HepG2 (cell line): ENCODE measurements at regions of chr6 and their contacts with region 1.

Region 1: GRCh38 chr6:31729515-31729978 is 448 bp upstream of the DDAH2 start:
- DNase-seq: peak; percentile 86
- ATAC-seq: peak; percentile 77
- H3K4me3 ChIP-seq: peak overlapping the region; percentile 60 to 79 (median 72)
- H3K27ac ChIP-seq: peak overlapping the region; percentile 72
- H3K4me1 ChIP-seq: peaks cover 56% of the 10 kb centered on the region
- H3K27me3 ChIP-seq: no peaks in the 10 kb centered on the region
- CTCF ChIP-seq: peak; percentile 96
- EP300 ChIP-seq: 0 out of 4 replicates have a peak, but pooled peaks of 1 of the 2 experiments have one; percentile 4
- POLR2A ChIP-seq: peak in 1 of 2 experiments; percentile 74; a peak in 2 of 4 replicates
- RAD21 ChIP-seq: peak; percentile 99

Region 2: GRCh38 chr6:31702819-31703522 is 26.6 kb before region 1 on chr6 and contains the start of gene ABHD16A:
- CTCF ChIA-PET with region 1: no interaction called
- POLR2A ChIA-PET with region 1: interaction called, 12 read pairs
- in situ Hi-C with region 1: no loop called
- intact Hi-C with region 1: no loop called
- DNase-seq: peak; percentile 98
- ATAC-seq: peak; percentile 93
- H3K4me3 ChIP-seq: peak within 1 kb of the TSS; percentile 71 to 84 (median 81)
- H3K27ac ChIP-seq: peak within 1 kb of the TSS; percentile 85
- H3K4me1 ChIP-seq: peaks cover 39% of the 10 kb centered on the region
- H3K27me3 ChIP-seq: peaks cover 0 to 3% of the 10 kb centered on the region in 2 experiments; a peak in 2 of 5 replicates
- CTCF ChIP-seq: peak; percentile 33
- EP300 ChIP-seq: peak; percentile 56 to 79; a peak in 3 of 4 replicates
- POLR2A ChIP-seq: peak; percentile 93 to 96
- RAD21 ChIP-seq: no peak
- total RNA-seq, gene ABHD16A: 16.2 and 43.5 TPM in 2 replicates

Region 3: GRCh38 chr6:31712296-31712695 is 17.3 kb before region 1 on chr6:
- CTCF ChIA-PET with region 1: no interaction called
- POLR2A ChIA-PET with region 1: interaction called, 11 read pairs
- in situ Hi-C with region 1: no loop called
- intact Hi-C with region 1: no loop called
- DNase-seq: no peak
- ATAC-seq: no peak; the same call in 2 of the 3 replicates
- H3K4me3 ChIP-seq: no peak overlapping the region
- H3K27ac ChIP-seq: no peak overlapping the region
- H3K4me1 ChIP-seq: peaks cover 27% of the 10 kb centered on the region
- H3K27me3 ChIP-seq: peaks cover 11 to 47% of the 10 kb centered on the region in 2 experiments; a peak in 4 of 5 replicates
- CTCF ChIP-seq: no peak
- EP300 ChIP-seq: no peak
- POLR2A ChIP-seq: no peak
- RAD21 ChIP-seq: no peak

Region 4: GRCh38 chr6:31763619-31763940 is 34.0 kb after region 1 on chr6:
- CTCF ChIA-PET with region 1: interaction called, 74 read pairs
- POLR2A ChIA-PET with region 1: interaction called, 279 read pairs
- in situ Hi-C with region 1: loop called (anchors 5 kb)
- intact Hi-C with region 1: no loop called
- DNase-seq: peak; percentile 68
- ATAC-seq: peak; percentile 10
- H3K4me3 ChIP-seq: no peak overlapping the region
- H3K27ac ChIP-seq: no peak overlapping the region
- H3K4me1 ChIP-seq: peaks cover 47% of the 10 kb centered on the region
- H3K27me3 ChIP-seq: no peaks in the 10 kb centered on the region
- CTCF ChIP-seq: peak; percentile 77
- EP300 ChIP-seq: no peak
- POLR2A ChIP-seq: no peak
- RAD21 ChIP-seq: no peak

Region 5: GRCh38 chr6:31769684-31770371 is 40.3 kb after region 1 on chr6:
- CTCF ChIA-PET with region 1: interaction called, 74 read pairs
- POLR2A ChIA-PET with region 1: interaction called, 279 read pairs
- in situ Hi-C with region 1: loop called (anchors 5 kb)
- intact Hi-C with region 1: loop called (anchors 1 kb)
- DNase-seq: peak; percentile 71
- ATAC-seq: peak; percentile 61
- H3K4me3 ChIP-seq: no peak overlapping the region
- H3K27ac ChIP-seq: no peak overlapping the region
- H3K4me1 ChIP-seq: peaks cover 44% of the 10 kb centered on the region
- H3K27me3 ChIP-seq: no peaks in the 10 kb centered on the region
- CTCF ChIP-seq: peak; percentile 98
- EP300 ChIP-seq: no peak
- POLR2A ChIP-seq: no peak
- RAD21 ChIP-seq: peak; percentile 96

Region 6: GRCh38 chr6:31795616-31796298 is 66.2 kb after region 1 on chr6 and contains the start of gene VARS1:
- CTCF ChIA-PET with region 1: interaction called, 3 read pairs
- POLR2A ChIA-PET with region 1: interaction called, 10 read pairs
- in situ Hi-C with region 1: no loop called
- intact Hi-C with region 1: no loop called
- DNase-seq: peak; percentile 90
- ATAC-seq: peak; percentile 89
- H3K4me3 ChIP-seq: peak within 1 kb of the TSS; percentile 89 to 98 (median 98)
- H3K27ac ChIP-seq: peak within 1 kb of the TSS; percentile 76
- H3K4me1 ChIP-seq: peaks cover 25% of the 10 kb centered on the region
- H3K27me3 ChIP-seq: no peaks in the 10 kb centered on the region; a peak in 1 of 5 replicates
- CTCF ChIP-seq: peak; percentile 98
- EP300 ChIP-seq: no peak
- POLR2A ChIP-seq: peak in 1 of 2 experiments; percentile 46; a peak in 1 of 4 replicates
- RAD21 ChIP-seq: peak; percentile 97
- total RNA-seq, gene VARS1: 56.1 and 59.2 TPM in 2 replicates

Region 7: GRCh38 chr6:31897612-31898382 is 168.2 kb after region 1 on chr6 and contains the start of gene EHMT2:
- CTCF ChIA-PET with region 1: no interaction called
- POLR2A ChIA-PET with region 1: no interaction called
- in situ Hi-C with region 1: no loop called
- intact Hi-C with region 1: no loop called
- DNase-seq: peak; percentile 76
- ATAC-seq: peak; percentile 70
- H3K4me3 ChIP-seq: peak within 1 kb of the TSS; percentile 89 to 100 (median 96)
- H3K27ac ChIP-seq: peak within 1 kb of the TSS; percentile 73
- H3K4me1 ChIP-seq: peaks cover 39% of the 10 kb centered on the region
- H3K27me3 ChIP-seq: peaks cover 0 to 7% of the 10 kb centered on the region in 2 experiments; a peak in 1 of 5 replicates
- CTCF ChIP-seq: no peak
- EP300 ChIP-seq: 0 out of 4 replicates have a peak, but pooled peaks of 1 of the 2 experiments have one; percentile 11
- POLR2A ChIP-seq: peak; percentile 62 to 90; a peak in 3 of 4 replicates
- RAD21 ChIP-seq: 0 out of 2 replicates have a peak, but pooled peaks have one; percentile 11
- total RNA-seq, gene EHMT2: 43.5 and 69.2 TPM in 2 replicates

Region 8: DNA sequence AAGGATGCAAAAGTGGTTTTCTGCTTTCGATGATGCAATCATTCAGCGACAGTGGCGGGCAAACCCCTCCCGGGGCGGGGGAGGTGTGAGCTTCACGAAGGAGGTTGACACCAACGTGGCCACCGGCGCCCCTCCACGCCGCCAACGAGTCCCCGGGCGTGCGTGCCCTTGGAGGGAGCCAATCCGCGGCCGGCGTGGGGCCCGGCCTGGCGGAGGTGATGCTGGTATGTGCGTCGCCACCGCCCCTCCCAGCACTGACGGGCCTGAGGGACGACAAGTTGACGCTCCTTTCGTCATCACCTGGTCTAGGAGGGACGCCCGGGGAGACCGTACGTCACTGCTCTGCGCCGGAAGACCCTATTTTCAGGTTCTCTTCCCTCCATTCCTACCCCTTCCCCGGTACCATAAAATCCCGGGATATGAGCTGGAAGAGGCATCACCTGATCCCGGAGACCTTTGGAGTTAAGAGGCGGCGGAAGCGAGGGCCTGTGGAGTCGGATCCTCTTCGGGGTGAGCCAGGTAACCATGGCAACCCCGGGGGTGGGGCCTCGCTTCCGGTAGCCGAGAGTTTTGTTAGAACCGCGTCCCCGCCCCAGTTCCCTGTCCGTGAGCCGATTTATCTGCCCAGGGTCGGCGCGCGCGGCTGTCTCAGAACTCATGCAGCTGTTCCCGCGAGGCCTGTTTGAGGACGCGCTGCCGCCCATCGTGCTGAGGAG is 242.6 kb after region 1 on chr6 and contains the start of gene DXO:
- CTCF ChIA-PET with region 1: no interaction called
- POLR2A ChIA-PET with region 1: no interaction called
- in situ Hi-C with region 1: no loop called
- intact Hi-C with region 1: no loop called
- DNase-seq: peak; percentile 98
- ATAC-seq: peak; percentile 86
- H3K4me3 ChIP-seq: peak within 1 kb of the TSS; percentile 73 to 94 (median 90)
- H3K27ac ChIP-seq: peak within 1 kb of the TSS; percentile 86
- H3K4me1 ChIP-seq: peaks cover 32% of the 10 kb centered on the region
- H3K27me3 ChIP-seq: no peaks in the 10 kb centered on the region; a peak in 1 of 5 replicates
- CTCF ChIP-seq: peak; percentile 17; the same call in 1 of the 2 replicates
- EP300 ChIP-seq: peak in 1 of 2 experiments; percentile 58; a peak in 1 of 4 replicates
- POLR2A ChIP-seq: peak; percentile 52 to 60; a peak in 3 of 4 replicates
- RAD21 ChIP-seq: peak; percentile 58
- total RNA-seq, gene DXO: 10.8 and 18.6 TPM in 2 replicates